ENCODE measurements at regions of chr19 and their contacts with region 1.

Region 1: DNA sequence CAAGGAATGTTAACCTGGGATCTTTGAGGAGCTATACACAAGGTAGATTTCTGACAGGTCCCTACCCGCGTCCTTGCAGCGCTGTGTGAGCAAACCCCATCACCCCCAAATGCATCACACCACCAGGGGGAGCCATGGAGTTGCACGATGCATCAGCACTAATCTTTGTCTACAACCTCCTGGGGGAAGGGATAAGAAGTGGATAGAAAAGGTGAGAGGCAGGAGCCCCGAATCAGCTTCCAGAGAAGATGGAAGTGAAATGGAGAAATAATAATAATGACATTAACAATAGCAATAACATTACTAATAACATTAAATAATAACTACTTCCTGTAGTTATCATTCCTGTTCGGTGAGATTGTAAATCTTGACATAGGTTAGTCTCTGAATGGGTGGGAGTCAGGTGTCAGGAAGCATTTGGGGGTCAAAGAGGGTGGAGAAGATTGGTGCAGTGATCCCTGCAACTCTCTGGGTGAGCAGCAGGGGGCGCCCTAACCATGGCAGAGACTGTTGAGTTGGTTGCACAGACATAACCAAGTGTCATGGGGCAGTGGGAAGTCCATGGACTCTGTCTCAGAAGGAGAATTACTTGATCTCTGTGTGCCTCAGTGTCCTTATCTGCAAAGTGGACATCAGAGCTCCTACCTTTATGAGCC is 16.5 kb downstream of the SIGLEC7 start:
- ATAC-seq: peak in 3 of 8 experiments; percentile 52 to 75 (median 70)
- H3K4me3 ChIP-seq: no peak overlapping the region
- H3K27ac ChIP-seq: no peak overlapping the region
- H3K4me1 ChIP-seq: no peaks in the 10 kb centered on the region

Region 2: DNA sequence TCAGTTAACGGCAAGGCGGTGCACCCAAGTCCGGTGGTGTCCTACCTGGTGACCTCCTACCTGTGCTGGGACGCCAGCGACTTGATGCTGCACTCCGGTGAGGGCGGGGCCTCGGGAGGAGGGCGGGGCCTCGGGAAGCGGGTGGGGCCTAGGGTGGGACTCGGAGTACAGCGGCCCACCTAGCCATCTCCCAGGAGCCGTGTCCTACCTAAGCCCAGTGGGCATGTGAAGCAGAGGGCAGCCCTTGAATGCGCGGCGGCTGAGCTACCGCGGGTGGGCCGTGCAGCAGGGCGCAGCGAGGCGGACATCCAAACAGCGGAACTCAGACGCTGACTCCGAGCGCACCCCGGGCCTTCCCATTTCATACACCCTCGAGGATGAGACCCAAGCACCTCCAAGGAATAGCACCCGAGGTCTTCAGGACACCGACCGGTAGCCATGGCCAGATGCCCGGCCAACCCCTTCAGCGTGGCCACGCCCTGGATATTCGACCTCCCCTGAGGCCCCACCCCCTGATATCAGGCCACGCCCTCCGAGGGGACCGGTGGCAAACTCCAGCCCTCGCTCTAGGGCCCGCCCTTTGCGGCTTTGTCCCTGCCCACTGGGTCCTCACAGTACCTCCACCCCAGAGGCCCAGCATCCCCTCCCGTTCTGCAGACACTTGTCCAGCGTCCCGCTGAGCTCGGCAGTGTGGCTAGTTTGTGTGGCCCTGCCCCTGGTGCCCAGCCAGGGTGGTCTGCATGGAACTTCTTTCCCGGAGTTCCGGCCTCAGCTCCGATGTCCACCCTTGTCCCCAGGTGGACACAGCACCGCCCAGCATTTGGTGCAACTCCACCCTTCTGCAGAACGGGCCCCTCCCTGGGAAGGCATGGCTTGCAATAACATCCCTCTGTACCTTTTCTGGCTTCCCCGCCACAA is 340.4 kb before region 1 on chr19:
- in situ Hi-C with region 1: no loop called
- ATAC-seq: peak; percentile 68 to 93 (median 90)
- H3K4me3 ChIP-seq: peak overlapping the region; percentile 24 to 45 (median 39)
- H3K27ac ChIP-seq: no peak overlapping the region
- H3K4me1 ChIP-seq: peaks cover 0 to 15% of the 10 kb centered on the region in 2 donors

Region 3: GRCh38 chr19:51210191-51210784 is 51.7 kb after region 1 on chr19:
- in situ Hi-C with region 1: no loop called
- ATAC-seq: no peak
- H3K4me3 ChIP-seq: no peak overlapping the region
- H3K27ac ChIP-seq: no peak overlapping the region
- H3K4me1 ChIP-seq: no peaks in the 10 kb centered on the region

Region 4: GRCh38 chr19:51259348-51260245 is 101.0 kb after region 1 on chr19:
- in situ Hi-C with region 1: loop called in 2 of 9 experiments (anchors 10 to 25 kb)
- ATAC-seq: peak in 4 of 8 experiments; percentile 29 to 84 (median 74)
- H3K4me3 ChIP-seq: no peak overlapping the region
- H3K27ac ChIP-seq: no peak overlapping the region
- H3K4me1 ChIP-seq: no peaks in the 10 kb centered on the region